ENCODE measurements at regions of chr10 and their contacts with region 1.

Region 1: DNA sequence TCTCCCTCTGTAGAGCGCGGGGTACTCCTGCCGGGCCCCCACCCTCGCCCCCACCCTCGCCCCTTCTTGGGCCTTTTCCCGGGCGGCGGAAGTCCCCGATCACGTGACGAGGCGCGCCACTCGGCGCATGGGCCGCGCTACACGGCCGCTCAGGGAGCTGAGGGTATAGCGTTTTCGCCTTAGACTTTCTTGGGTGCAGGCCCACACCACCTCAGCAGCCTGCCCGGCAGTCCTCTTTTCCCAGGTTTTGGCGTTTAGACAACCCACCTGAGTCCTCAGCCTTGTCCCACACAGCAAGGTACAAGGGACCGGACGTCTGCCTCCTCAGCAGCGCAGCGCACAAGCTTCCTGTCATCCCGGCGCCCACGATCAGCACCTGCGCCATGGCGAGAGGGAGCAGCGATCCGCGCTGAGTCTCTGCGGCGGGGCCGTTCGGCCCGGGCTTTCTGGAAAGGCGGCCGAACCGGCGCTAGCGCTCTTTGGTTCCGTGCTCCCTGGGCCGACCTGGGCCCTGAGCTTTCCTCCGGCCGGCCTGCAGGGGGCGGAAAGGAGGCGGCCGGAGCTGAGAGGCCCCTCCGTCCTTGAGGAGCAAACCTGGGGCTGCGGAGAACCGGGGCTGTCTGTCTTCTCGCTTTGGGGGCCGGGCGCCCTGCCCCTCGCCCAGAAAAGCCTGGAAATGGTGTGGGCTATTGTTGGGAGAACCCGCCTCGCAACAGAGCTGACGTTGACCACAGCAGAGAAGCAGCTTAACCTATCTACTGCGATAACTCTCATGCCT is at the start of gene RNLS:
- DNase-seq: peak; percentile 78
- ATAC-seq: peak; percentile 91
- H3K4me3 Mint-ChIP-seq: peak within 1 kb of the TSS; percentile 82
- H3K27ac Mint-ChIP-seq: peak within 1 kb of the TSS; percentile 88
- H3K4me1 Mint-ChIP-seq: peaks cover 10% of the 10 kb centered on the region
- H3K27me3 Mint-ChIP-seq: peaks cover 15% of the 10 kb centered on the region
- total RNA-seq, gene RNLS: 2.9 to 3.7 TPM

Region 2: DNA sequence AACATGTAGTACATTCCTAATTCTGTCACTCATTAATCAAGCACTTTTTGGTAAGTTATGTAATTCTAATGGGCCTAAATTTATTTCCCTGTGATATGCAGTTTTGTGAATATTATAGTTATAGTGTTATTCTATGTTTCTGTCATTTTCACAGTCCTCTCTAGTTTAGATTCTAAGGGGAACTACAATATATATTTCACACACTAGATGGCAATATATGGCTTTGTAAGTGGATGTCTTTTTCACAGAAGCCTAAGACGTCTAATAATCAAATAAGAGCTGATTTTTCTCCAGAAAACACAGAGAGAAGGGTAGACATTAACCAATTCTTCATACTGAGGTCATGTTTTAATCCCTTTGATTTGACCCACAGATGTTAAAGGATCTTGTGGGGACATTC is 17.9 kb before region 1 on chr10:
- CTCF ChIA-PET with region 1: interaction called, 13 read pairs
- DNase-seq: no peak
- ATAC-seq: peak; percentile 42
- H3K4me3 Mint-ChIP-seq: no peak overlapping the region
- H3K27ac Mint-ChIP-seq: no peak overlapping the region
- H3K4me1 Mint-ChIP-seq: peaks cover 2% of the 10 kb centered on the region
- H3K27me3 Mint-ChIP-seq: peaks cover 6% of the 10 kb centered on the region

Region 3: DNA sequence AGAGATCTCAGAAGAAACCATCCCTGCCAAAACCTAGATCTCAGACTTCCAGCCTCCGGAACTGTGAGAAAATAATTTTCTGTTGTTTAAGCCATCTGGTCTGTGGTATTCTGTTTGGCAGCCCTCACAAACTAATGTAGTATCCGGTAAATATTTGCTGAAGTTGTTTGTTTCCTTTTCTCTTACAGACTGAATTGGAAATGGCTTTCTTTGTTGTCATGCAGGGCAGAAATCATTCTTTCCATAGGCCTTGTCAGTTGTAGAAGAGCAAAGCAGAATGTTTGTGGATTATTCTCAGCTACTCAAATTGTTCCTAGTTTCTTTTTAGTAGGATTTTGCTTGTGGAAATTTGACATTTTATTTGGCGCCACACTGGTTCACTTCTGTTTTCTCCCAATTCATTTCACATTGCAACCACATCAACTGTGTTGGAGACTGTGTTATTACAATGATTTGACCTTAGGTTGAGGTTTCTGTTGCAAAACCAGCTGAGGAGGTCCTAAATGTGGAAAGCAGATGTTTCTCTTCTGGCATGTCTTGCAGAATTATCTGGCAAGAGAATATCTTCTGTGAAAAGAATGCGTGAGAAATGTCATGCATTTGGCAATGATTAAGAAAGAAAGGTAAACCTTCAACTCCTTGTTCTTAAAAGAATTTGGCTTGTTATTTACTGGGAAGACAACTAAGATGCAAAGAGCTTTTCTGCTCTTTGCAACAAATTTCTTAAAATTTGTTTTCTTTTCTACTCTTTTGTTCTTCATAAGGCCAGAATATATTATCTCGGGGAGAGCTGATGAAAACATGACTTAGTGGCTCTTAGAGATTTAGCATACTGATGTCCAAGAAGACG is 343.8 kb after region 1 on chr10:
- CTCF ChIA-PET with region 1: no interaction called
- DNase-seq: no peak
- ATAC-seq: no peak
- H3K4me3 Mint-ChIP-seq: no peak overlapping the region
- H3K27ac Mint-ChIP-seq: no peak overlapping the region
- H3K4me1 Mint-ChIP-seq: peaks cover 3% of the 10 kb centered on the region
- H3K27me3 Mint-ChIP-seq: no peaks in the 10 kb centered on the region